ENCODE measurements at regions of chr11 and their contacts with region 1.

Region 1: DNA sequence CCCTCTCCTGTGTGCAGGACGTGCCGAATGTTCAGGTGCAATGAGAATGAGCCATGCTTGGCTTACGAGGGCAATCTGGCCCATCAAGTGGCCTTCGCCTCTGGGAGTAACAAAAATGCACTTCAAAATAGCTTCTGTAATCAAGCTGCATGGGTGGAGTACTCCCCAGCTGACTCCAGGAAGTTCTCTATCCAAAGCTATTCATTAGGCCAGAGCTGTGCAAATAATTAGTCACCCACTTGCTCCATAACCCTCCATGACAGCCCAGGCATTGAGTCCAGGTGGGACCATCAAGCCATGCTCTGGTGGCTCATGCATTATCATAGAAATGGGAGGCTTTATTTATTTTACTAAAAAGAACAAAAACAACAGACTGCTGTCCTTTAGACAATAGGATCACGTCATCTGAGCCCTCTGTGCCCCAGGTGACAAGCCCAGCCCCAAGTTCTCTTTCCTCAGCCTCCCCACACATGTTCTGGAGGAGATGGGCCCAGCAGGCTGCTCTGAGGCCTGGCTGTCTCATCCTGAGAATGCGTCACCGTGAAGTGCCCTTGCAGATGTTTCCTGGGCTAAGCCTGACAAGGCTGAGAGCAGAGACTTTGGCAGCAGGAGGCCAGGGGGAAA is 244.7 kb downstream of the ETS1 start:
- DNase-seq: peak; percentile 90
- H3K4me3 Mint-ChIP-seq: peak overlapping the region; percentile 24
- H3K27ac Mint-ChIP-seq: peak overlapping the region; percentile 88
- H3K4me1 Mint-ChIP-seq: peaks cover 79% of the 10 kb centered on the region
- H3K27me3 Mint-ChIP-seq: no peaks in the 10 kb centered on the region

Region 2: DNA sequence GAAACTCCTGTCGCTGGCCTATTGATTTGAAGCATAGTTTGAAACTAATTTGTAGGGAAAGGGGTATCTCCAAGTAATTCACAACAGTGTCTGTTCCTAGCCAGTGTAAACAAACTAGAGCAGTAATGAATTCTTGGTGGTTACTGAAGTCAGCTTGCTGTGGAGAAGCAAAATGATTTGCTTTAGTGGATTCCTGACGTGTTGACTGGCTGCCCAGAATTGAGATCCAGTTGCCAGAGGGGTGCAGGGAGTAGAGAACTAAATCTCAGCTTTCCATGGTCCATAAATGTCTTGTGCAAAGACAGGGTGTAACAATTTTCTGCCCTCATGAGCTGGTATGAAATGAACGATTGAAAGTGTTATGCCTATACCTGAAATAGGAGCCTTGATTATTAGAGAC is 959.6 kb before region 1 on chr11:
- intact Hi-C with region 1: no loop called
- DNase-seq: no peak
- H3K4me3 Mint-ChIP-seq: no peak overlapping the region
- H3K27ac Mint-ChIP-seq: no peak overlapping the region
- H3K4me1 Mint-ChIP-seq: no peaks in the 10 kb centered on the region
- H3K27me3 Mint-ChIP-seq: no peaks in the 10 kb centered on the region

Region 3: DNA sequence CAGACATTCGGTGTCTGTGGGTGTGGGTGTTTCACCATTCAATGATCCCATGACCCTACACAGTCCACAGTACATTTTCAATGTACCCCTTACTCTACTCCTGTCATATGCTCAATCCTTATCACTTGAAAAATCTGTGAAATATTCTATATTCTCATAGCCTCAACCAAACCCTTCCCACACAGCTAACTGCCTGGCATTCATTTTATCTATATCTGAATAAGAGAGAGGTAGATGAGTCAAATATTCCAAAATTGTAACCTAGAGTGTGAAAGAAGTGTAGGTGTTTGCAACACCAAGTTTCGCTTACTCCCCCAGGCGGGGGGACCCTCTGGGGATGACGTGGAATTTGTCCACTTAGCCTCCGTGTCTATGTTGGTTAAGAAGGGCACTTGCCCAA is 110.0 kb before region 1 on chr11:
- intact Hi-C with region 1: loop called (anchors 2 kb)
- DNase-seq: peak; percentile 68
- H3K4me3 Mint-ChIP-seq: peak overlapping the region; percentile 55
- H3K27ac Mint-ChIP-seq: peak overlapping the region; percentile 90
- H3K4me1 Mint-ChIP-seq: peaks cover 41% of the 10 kb centered on the region
- H3K27me3 Mint-ChIP-seq: no peaks in the 10 kb centered on the region

Region 4: DNA sequence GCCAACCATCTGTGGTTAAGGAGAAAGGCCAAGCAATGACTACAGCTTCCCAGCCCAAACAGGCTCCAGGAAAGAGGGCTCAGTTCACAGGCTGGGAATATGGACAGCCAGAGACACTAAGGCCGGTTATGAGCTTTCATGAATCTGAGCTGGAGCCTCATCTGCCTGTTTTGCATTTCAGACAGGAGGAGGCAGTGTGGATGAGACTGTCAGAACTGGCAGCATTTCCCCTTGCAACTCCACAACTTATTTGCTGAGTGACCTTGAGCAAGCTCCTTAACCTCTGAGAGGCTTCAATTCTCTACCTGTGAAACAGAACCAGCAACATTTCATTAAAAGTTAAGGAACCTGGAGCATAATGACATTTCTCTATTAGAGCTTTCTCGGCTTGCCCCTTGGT is 19.2 kb before region 1 on chr11:
- intact Hi-C with region 1: loop called (anchors 1 kb)
- DNase-seq: peak; percentile 87
- H3K4me3 Mint-ChIP-seq: peak overlapping the region; percentile 69
- H3K27ac Mint-ChIP-seq: peak overlapping the region; percentile 97
- H3K4me1 Mint-ChIP-seq: peaks cover 79% of the 10 kb centered on the region
- H3K27me3 Mint-ChIP-seq: no peaks in the 10 kb centered on the region

Region 5: DNA sequence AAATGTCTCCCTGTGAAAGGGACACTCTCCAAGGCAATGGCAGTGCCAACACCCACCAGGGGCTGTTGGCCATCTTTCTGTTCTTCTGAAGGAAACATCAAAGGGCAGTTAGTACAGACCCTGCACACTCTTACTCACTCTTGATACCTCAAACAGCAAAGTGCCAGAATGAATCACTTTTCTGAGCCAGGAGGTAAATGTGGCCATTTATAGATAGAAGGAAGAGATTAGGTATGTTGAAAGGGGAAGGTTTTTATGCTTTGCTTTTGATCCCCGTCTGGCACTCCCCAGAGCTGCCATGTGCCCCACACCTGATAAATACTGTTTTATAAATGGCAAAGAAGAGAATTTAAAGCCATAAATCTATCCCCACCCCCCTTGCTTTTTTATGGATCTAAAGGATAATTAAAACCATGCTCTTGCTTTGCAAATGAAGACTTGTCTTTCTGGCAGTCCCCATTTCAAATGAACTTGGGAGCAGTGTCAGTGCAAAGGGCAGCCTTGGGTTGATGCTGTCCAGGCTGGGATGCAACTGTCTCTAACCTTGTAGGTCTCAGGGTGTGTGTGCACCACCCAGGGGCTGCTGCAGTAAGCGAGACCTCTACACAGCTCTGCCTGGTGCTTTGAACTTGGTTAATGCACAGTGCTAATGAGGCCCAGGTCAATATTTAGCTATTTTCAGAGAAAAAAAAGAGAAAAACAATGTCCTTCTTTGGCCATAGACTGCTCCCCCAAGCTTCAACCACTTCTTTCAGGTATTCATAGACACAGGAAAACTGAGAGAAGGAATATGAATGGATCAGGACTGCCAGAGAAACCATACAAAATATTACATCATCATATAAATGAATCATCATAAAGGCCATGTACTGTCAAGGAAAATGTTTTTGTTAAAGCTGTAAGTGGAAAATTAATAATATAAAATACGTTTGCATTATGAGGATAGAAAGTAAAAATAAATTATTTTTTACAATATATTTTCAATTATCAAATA is 37.3 kb after region 1 on chr11:
- intact Hi-C with region 1: loop called (anchors 1 kb)
- DNase-seq: peak; percentile 68
- H3K4me3 Mint-ChIP-seq: no peak overlapping the region
- H3K27ac Mint-ChIP-seq: peak overlapping the region; percentile 72
- H3K4me1 Mint-ChIP-seq: peaks cover 24% of the 10 kb centered on the region
- H3K27me3 Mint-ChIP-seq: no peaks in the 10 kb centered on the region

Region 6: GRCh38 chr11:128422576-128423370 is 80.2 kb after region 1 on chr11:
- intact Hi-C with region 1: loop called (anchors 2 kb)
- DNase-seq: peak; percentile 89
- H3K4me3 Mint-ChIP-seq: peak overlapping the region; percentile 65
- H3K27ac Mint-ChIP-seq: peak overlapping the region; percentile 96
- H3K4me1 Mint-ChIP-seq: peaks cover 24% of the 10 kb centered on the region
- H3K27me3 Mint-ChIP-seq: no peaks in the 10 kb centered on the region

Region 7: DNA sequence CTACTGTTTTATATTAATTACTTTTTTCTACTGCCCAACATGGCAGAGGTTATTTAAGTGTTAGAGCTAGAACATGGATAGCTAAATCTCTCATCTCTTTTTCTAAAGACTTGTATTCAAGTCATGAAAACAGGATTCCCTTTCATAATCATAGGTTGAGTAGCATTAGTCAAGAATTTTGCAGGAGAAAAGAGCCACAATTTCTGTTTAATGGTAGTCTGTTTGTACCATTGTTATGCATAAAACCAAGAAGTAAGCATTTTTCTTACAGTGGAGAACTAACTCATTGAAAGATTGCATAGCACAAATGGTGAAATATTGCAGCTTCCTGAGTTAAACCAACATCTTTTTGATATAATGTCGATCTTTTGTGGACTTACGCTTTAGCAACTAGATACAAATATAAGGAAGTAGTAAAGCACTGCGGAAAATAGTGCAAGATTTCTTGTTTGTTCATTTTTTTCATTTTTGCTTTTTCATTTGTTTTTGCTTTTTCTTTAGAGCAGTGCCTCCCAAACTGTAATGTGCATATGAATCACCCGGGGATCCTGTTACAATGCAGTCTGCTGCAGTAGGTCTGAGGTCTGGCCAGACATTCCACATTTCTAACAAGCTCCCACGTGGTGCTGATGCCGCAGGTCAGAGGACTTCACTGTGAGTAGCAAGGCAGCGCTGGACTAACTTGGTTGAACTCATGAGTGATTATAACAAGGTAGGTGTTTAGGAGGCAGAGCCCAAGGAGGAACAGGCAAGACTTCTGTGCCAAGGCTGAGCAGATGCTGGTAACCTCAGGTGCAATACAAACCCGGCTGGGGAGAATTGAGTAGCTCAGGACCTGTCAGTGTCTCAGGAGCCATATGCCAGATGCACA is 240.1 kb after region 1 on chr11:
- intact Hi-C with region 1: loop called (anchors 1 kb)
- DNase-seq: no peak
- H3K4me3 Mint-ChIP-seq: peak overlapping the region; percentile 59
- H3K27ac Mint-ChIP-seq: peak overlapping the region; percentile 81
- H3K4me1 Mint-ChIP-seq: peaks cover 35% of the 10 kb centered on the region
- H3K27me3 Mint-ChIP-seq: peaks cover 7% of the 10 kb centered on the region